Activated T-helper 2 cell treated with anti-CD3 and anti-CD28 coated beads, Interferon-gamma antibody, Interleukin-2, Interleukin-4, amounts not matched to agents 10 μg/mL and 5 μg/mL and 100 μg/mL, durations not matched to agents 14 hours and 24 hours and 36 hours (primary cell): ENCODE measurements at regions of chr17 and their contacts with region 1.

Region 1: DNA sequence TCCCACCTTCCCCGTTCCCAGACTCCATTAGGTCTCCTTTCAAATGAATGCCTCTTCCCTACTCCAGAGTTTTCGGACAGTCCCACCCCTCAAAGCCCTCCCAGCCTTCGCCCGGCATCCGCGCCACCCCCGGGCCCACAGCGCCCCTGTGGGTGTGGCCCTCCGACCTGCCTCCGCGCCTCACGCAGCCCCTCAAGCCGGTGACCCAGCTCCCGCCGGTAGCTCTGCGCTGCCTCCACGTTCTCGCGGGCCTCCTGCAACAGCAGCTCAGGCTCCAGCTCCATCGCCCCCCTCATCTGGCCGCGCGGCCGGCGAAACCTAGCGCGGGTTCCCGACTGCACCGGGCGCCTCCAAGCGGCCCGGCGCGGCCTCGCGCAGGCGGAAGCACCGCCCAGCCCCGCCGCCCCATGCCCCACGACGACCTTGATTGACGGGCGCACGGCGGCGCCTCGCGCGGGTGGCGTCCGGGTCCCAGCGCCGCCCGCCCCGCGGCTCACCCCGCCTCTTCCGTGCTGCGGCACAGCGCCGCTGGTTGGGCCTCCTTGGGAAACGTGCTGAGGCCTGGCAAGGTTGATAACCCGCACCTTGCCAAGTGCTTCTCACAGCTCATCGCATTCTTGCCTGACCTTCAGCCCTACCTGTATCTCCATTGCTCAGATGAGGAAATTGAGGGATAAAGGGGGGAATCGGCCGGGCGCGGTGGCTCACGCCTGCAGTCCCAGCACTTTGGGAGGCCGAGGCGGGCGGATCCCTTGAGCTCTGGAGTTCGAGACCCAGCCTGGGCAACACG is at the start of gene CRLF3:
- DNase-seq: peak; percentile 90
- H3K4me3 Mint-ChIP-seq: peak within 1 kb of the TSS; percentile 92
- H3K27ac Mint-ChIP-seq: peak within 1 kb of the TSS; percentile 84
- H3K4me1 Mint-ChIP-seq: peaks cover 35% of the 10 kb centered on the region
- H3K27me3 Mint-ChIP-seq: no peaks in the 10 kb centered on the region
- total RNA-seq, gene CRLF3: 42.0 and 46.5 TPM in 2 replicates

Region 2: DNA sequence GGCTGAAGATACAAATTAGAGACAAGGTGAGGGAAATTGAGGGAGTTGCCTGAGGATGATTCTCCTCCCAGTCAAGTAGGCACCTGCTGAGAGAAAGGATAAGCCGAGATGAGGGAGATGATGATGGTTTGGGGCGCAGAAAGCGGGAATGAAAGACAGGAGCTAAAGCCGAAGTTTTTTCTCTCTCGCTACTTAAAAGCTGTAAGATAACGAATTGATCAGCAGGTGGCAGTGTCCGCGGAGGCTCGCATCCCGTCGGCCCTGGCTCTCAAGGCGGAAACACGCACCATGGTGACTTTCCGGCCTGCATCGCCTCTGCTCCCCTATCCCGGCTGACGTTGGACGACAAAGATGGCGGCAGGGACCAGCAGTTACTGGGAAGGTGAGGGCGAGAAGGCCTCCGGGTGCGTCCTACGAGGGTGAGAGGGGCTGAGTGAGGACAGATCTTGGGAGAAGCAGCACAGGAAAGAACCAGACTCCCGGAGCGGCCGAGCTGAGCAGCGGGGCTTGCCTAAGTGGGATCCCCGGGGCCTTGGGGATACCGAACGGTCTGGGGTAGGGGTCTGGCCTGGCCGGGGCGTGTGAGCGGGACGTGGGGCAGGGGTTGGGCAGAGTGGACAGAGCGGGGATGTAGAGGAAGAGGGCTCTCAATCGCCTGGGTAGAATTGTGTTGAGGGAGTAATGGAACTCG is 347.3 kb before region 1 on chr17 and contains the start of gene GOSR1:
- intact Hi-C with region 1: loop called (anchors 10 kb)
- DNase-seq: peak; percentile 89
- H3K4me3 Mint-ChIP-seq: peak within 1 kb of the TSS; percentile 95
- H3K27ac Mint-ChIP-seq: peak within 1 kb of the TSS; percentile 95
- H3K4me1 Mint-ChIP-seq: peaks cover 31% of the 10 kb centered on the region
- H3K27me3 Mint-ChIP-seq: no peaks in the 10 kb centered on the region
- total RNA-seq, gene GOSR1: 51.1 and 53.6 TPM in 2 replicates

Region 3: GRCh38 chr17:30788918-30789317 is 35.6 kb before region 1 on chr17:
- intact Hi-C with region 1: loop called (anchors 5 kb)
- DNase-seq: no peak
- H3K4me3 Mint-ChIP-seq: no peak overlapping the region
- H3K27ac Mint-ChIP-seq: peak overlapping the region; percentile 38
- H3K4me1 Mint-ChIP-seq: peaks cover 14% of the 10 kb centered on the region
- H3K27me3 Mint-ChIP-seq: no peaks in the 10 kb centered on the region

Region 4: DNA sequence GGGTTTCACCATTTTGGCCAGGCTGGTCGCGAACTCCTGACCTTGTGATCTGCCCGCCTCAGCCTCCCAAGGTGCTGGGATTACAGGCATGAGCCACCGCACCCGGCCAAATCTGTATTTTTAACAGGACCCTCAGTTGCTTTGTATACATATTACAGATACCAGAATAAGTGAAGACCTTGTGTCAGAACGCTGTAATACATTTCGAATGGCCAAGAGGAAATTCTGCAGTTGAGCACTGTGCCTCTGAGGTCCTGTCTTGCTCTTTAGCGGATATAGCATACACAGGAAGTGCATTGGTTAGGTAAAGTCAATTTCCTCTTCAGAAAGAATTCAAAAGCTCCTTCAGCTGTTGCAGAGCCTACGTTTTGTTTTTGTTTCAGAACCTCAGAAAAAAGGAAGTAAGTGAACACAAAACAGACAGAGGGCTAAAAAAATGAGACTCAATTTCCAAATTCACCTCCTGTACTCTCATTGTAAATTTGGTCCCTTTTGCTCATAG is 15.7 kb before region 1 on chr17:
- intact Hi-C with region 1: loop called (anchors 1 kb)
- DNase-seq: peak; percentile 46
- H3K4me3 Mint-ChIP-seq: peak overlapping the region; percentile 79
- H3K27ac Mint-ChIP-seq: peak overlapping the region; percentile 94
- H3K4me1 Mint-ChIP-seq: peaks cover 47% of the 10 kb centered on the region
- H3K27me3 Mint-ChIP-seq: no peaks in the 10 kb centered on the region

Region 5: DNA sequence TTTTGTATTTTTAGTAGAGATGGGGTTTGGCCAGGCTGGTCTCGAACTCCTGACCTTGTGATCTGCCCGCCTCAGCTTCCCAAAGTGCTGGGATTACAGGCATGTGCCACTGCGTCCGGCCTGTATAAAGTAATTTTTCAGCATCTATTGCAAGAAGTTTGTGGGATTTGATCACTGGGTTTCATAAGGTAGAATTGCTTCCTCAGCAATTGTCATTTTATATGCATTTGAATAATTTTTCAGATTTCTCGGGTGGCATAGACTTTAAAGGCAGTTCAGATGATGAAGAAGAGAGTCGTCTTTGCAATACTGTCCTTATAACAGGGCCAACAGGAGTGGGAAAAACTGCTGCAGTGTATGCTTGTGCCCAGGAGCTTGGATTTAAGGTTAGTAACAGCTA is 44.5 kb after region 1 on chr17:
- intact Hi-C with region 1: no loop called
- DNase-seq: no peak
- H3K4me3 Mint-ChIP-seq: no peak overlapping the region
- H3K27ac Mint-ChIP-seq: no peak overlapping the region
- H3K4me1 Mint-ChIP-seq: no peaks in the 10 kb centered on the region
- H3K27me3 Mint-ChIP-seq: no peaks in the 10 kb centered on the region

Region 6: GRCh38 chr17:31313982-31314784 is 489.6 kb after region 1 on chr17 and contains the start of gene EVI2B:
- intact Hi-C with region 1: loop called (anchors 5 kb)
- DNase-seq: no peak
- H3K4me3 Mint-ChIP-seq: peak within 1 kb of the TSS; percentile 88
- H3K27ac Mint-ChIP-seq: peak within 1 kb of the TSS; percentile 96
- H3K4me1 Mint-ChIP-seq: peaks cover 51% of the 10 kb centered on the region
- H3K27me3 Mint-ChIP-seq: no peaks in the 10 kb centered on the region
- total RNA-seq, gene EVI2B: 13.0 and 13.9 TPM in 2 replicates